ENCODE measurements at regions of chr6 and their contacts with region 1.

Region 1: DNA sequence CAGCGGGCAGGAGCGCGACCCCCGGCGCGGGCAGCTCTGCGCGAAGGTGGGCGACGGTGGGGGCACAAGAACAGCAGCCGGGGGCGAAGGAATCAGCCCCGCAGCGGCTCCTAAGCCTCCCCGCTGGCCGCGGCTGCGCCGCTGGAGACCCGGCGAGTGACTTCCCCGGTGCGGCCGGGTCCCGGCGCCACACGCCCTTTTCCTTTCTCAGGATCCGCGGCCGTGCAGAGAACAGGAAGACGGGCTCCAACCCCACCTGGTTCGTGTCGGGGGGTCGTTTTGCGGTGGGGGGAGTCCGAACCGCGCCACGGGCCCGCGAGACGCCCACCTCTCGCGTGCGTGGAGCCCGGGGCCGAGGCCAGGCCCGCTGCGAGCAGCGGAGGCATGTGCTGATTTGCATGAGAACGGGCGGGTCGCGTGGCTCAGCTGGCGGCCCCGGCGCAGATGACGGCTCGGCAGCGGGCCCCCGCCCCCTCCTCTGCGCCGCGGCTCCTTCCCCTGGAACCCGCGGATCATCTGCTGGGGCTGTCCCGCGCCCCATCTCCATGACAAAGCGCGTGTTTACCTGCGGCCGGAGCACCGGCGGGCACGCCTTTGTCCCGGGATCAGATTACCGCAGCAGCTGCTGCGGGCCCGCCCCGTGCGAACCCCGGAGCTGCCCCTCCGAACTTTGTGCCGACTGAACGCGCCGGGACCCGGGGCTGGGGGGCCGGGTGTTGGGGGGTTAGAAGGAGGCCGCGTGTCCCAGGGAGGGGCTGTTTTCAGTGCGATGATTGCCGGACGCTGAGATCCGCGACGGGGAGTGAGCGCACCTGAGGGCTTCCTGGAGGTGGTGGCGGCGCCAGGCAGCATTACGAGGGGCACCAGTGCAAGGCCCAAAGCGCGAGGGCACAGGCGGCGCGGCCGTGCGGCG is 4.9 kb upstream of the DLL1 start:
- DNase-seq: peak in 18 of 42 donors; percentile 45 to 82 (median 62)

Region 2: DNA sequence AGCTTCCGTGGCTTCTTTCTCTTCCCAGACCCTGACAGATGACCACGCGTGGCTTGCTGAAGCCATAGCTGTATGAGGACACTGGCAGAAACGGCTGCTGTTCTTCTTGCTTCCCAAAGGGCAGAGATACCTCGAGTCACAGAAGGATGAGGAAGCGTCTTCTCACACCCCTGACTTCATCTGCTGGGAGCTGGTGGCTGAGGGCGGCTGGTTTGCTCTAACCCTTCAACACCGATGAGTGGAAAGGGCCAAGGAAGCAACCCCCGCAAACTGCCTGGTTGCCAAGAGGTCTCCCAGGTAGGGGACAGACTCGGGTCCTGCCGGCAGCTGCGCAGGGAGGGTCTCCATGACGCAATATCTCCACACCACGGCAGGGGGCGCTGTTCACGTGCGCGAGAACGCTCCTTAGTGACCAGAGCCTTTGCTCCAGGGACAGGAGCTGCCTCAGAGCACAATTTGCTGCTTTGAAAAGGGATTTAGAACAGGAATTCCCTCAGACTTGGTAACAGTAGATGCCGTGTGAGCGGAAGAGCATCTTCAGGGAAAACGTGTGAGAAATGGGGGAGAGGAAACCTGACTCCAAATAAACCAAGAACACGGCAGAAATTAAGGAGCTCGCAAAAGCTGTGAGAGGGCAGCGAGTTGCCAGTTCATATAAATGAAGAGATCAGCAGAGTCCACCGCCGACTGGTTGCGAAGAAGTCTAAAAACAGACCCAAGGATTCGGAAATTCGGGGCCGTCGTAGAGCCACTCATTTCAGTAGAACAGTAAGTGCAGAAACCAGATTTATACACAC is 464.1 kb before region 1 on chr6:
- intact Hi-C with region 1: loop called (anchors 5 kb)
- DNase-seq: peak; percentile 36 to 94 (median 82)

Region 3: GRCh38 chr6:169959136-169960002 is 336.4 kb before region 1 on chr6:
- intact Hi-C with region 1: loop called (anchors 5 kb)
- DNase-seq: peak in 15 of 42 donors; percentile 5 to 44 (median 15)

Region 4: DNA sequence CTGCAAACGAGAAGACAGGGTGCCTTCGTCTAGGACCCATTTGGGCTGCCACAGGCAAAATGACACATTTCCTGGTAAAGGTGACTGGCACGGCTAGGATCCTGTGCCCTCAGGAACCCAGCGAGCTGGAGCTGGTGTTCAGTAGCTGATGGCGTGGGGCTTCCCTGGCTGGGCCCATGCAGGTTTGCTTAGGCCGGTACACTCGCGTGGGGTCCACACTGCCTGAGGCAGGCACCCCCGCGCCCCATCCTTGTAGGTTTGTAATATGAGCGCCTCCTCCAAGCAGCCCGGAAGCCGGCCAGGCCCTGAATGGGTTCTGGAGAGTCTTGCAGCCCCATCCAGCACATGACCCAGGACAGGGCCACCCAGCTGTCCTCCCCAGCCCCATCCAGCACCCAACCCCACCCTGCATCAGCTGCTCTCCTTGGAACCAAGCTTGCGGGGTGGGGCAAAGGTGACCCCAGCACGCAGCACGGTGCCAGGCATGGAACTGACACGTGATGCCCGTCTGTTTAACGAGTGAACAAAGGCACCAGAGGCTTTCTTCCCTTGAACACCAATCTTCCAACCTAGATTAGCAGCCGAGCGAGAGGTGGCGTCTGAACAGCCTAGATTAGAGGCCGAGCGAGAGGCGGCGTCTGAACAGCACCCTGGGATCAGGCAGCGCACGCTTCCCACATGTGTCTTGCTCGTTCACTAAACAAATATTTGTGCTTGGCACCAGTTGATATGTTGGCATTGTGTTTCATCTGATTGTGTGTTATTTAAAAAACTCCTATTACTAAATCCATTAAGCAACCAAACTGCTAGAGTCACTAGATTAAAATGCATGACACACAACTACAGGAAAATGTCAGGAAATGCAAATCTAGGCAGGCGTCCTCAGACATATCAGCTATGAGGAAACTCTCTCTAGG is 116.9 kb before region 1 on chr6:
- intact Hi-C with region 1: loop called (anchors 10 kb)
- DNase-seq: peak in 17 of 42 donors; percentile 0 to 42 (median 14)

Measured in head of caudate nucleus (tissue), 42 donors.